AG04449 (cell line): ENCODE measurements at regions of chr2 and their contacts with region 1.

Region 1: DNA sequence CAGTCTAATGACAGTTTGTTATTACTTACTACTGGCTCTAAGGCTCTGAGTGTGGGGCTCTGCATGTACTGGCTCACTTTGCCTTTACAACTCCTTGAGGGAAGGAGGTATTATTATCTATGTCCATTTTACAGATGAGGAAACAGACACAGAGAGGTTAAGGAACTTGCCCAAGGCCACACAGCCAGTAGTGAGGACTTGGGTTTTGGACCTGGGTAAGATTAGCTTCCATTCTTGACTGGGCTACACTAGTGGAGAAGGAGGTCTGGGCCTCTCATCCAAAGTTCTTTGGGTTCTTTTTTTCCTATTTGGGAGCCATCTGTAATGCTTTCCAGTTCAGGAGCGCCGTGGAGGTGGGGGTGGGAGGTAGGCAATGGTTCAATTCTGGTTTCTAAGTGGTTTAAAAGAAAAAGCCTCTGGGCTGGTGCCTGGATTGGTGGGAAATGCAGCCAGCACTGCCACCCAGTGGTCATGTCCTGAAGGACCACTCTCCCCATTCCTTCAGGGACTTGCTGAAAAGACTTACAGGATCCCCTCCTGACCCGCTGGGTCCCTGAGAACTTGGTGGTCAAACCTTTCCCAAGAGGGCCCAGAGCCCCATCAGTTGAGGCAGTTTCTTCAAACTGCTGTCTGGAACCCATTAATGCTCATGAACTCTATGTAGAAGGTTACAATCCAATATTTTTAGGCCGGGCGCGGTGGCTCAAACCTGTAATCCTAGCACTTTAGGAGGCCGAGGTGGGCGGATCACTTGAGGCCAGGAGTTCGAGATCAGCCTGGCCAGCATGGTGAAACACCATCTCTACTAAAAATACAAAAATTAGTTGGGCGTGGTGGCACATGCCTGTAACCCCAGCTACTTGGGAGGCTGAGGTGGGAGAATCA is 38.6 kb upstream of the NOTO start:
- DNase-seq: no peak
- H3K4me3 ChIP-seq: no peak overlapping the region
- CTCF ChIP-seq: peak; percentile 87

Region 2: DNA sequence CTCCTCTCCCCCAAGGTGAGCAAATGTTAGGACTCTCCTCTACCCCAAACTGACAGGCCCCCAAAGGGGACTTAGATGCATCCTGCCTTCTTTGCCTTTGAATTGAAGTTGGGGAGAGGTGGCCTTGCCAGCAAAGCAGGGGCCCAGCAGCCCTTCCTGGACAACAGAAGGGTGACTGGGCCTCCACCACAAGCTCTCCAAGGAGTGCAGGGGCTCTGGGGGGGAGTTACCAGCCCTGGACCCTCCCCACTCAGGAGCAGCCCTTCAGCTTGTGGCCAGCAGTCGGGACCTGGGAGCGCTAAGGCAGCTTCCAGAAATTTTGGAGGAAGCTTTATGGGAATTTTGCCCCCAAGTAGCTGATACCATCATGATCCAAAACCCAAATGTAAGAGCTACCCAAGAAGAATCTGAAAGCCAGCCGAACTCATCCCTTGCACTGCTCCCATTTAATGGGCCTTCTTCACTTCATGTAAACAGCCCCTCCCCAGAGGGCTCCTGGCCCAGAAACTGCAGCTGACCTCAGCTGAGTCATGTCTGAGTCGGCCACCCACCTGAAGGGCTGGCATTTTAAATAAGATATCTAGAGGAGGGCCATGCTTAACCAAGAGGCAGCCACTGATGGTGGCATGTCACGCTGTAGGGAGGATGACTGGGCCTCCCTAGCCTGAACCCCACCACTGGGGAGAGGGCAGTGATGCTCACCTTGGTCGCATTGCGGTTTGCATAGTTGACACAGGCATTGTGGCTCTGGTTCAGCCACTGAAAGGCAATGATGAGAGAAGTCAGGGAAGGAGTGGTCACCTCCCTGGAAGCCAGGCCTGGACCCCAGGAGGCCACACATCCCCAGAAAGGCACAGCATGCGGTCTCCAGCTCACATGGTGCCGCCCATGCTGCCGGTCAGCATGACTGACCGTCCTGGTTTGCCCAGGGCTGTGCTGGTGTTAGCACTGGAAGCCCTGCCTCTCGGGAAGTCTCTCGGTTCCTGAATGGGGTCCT is 163.7 kb before region 1 on chr2:
- CTCF ChIA-PET with region 1: interaction called, 129 read pairs
- POLR2A ChIA-PET with region 1: no interaction called
- DNase-seq: no peak
- H3K4me3 ChIP-seq: no peak overlapping the region
- CTCF ChIP-seq: no peak